ENCODE measurements at regions of chr4 and their contacts with region 1.

Region 1: GRCh38 chr4:17189401-17189720 is 290.9 kb upstream of the LDB2 start:
- DNase-seq: peak; percentile 87
- ATAC-seq: peak; percentile 73
- H3K4me3 ChIP-seq: no peak overlapping the region
- H3K27ac ChIP-seq: peak overlapping the region; percentile 89; the same call in 1 of the 2 replicates
- H3K4me1 ChIP-seq: peaks cover 19% of the 10 kb centered on the region
- H3K27me3 ChIP-seq: no peaks in the 10 kb centered on the region
- CTCF ChIP-seq: no peak
- POLR2A ChIP-seq: no peak
- RAD21 ChIP-seq: no peak

Region 2: DNA sequence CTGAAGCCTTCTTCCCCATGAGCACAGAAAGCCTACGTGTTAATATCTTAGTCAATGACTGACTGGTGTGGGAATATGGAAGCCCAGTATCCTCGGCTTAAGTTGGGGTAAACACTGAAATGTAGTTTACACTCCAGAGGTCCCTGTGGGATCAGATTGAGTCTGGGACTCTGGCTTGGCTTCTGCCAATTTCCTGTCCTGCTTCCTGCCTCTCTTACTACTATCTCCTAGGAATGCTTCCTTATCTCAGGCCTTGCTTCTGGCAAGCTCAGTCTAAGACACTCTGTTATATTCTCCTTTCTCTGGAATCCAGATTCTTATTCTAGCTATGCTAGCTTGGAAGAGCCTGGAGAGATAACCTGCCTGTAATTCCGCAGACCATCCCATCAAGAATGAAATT is 116.9 kb before region 1 on chr4:
- CTCF ChIA-PET with region 1: no interaction called
- POLR2A ChIA-PET with region 1: interaction called, 3 read pairs
- dilution Hi-C with region 1: no loop called
- in situ Hi-C with region 1: no loop called
- intact Hi-C with region 1: loop called (anchors 5 kb)
- DNase-seq: peak; percentile 42
- ATAC-seq: peak; percentile 59
- H3K4me3 ChIP-seq: no peak overlapping the region
- H3K27ac ChIP-seq: no peak overlapping the region
- H3K4me1 ChIP-seq: peaks cover 18% of the 10 kb centered on the region
- H3K27me3 ChIP-seq: no peaks in the 10 kb centered on the region
- CTCF ChIP-seq: no peak
- POLR2A ChIP-seq: no peak
- RAD21 ChIP-seq: no peak